MCF 10A (cell line): ENCODE measurements at regions of chr3 and their contacts with region 1.

Region 1: GRCh38 chr3:47824541-47825473 is 21.9 kb downstream of the DHX30 start:
- DNase-seq: peak; percentile 83
- H3K4me3 Mint-ChIP-seq: peak overlapping the region; percentile 85
- H3K27ac Mint-ChIP-seq: peak overlapping the region; percentile 92
- H3K4me1 Mint-ChIP-seq: peaks cover 12% of the 10 kb centered on the region
- H3K27me3 Mint-ChIP-seq: no peaks in the 10 kb centered on the region
- CTCF ChIP-seq: peak; percentile 72

Region 2: DNA sequence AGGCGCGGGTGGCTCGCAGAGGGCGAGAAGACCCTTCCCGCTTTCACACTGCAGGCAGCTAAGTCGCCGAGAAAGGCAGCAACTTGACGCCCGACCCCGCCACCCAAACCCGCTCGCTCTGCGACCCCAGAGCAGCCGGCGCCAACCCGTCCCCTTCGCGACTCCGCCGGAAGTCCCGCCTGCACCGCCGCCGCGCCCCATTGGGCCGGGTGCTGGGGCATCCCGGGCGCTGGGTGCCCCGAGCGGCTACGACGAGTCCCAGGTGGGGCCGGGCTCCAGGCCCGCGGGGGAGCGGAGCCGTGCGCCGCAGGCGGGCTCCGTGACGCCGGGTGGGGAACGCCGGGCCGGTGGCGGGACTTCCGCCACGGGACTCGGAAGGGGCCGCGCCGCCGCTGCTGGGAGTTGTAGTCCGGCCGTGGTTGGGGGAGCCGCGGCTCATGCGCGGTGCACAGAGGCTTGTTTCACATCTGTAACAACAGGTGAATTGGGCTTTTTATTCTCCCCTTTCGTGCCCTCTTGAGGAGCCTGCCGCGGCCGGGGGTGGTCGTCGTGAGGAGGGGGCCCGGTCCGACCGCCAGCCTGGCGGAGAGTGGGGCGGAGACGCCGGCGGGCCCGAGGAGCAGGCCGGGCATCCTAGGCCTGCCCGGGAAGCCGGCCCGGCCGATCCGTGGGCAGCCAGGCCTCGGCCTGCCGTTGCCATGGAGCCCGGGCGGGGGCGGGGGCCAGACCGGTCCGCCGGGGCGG is 21.9 kb before region 1 on chr3 and contains the start of gene DHX30:
- CTCF ChIA-PET with region 1: interaction called, 5 read pairs
- POLR2A ChIA-PET with region 1: interaction called, 28 read pairs
- intact Hi-C with region 1: no loop called
- DNase-seq: peak; percentile 80
- H3K4me3 Mint-ChIP-seq: peak within 1 kb of the TSS; percentile 94
- H3K27ac Mint-ChIP-seq: peak within 1 kb of the TSS; percentile 97
- H3K4me1 Mint-ChIP-seq: peaks cover 12% of the 10 kb centered on the region
- H3K27me3 Mint-ChIP-seq: no peaks in the 10 kb centered on the region
- CTCF ChIP-seq: no peak
- total RNA-seq, gene DHX30: 80.5 and 86.2 TPM in 2 replicates

Region 3: DNA sequence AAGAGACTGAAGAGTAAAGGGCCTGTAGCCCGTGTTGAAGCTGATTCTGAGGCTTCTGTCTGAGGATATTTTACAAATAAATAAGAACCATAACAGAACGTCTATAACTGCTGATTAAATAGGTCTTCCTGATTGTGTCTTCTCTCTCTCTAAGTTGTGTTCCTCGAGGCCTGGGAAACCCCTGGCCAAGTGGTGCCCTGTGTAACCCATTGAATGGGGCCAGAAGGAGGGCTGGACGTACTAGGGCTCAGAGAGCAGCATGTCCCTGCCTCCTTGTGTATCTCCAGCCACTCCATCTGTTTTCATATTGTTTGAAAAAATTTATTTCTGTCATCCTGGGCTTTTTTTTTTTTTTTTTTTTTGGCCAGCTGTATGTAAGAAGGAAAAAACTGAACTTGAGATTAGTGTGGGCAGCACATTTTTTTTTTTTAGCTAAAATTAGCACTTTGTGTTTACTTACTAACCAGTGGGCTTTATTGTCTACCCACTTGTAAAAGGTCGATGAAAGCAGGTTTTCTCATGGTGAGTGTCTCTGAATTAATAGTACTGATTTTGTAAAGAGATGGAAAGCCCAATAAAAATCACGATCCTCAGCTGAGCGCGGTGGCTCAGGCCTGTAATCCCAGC is 11.1 kb before region 1 on chr3:
- CTCF ChIA-PET with region 1: interaction called, 19 read pairs
- POLR2A ChIA-PET with region 1: interaction called, 13 read pairs
- intact Hi-C with region 1: no loop called
- DNase-seq: no peak
- H3K4me3 Mint-ChIP-seq: no peak overlapping the region
- H3K27ac Mint-ChIP-seq: no peak overlapping the region
- H3K4me1 Mint-ChIP-seq: no peaks in the 10 kb centered on the region
- H3K27me3 Mint-ChIP-seq: no peaks in the 10 kb centered on the region
- CTCF ChIP-seq: no peak

Region 4: DNA sequence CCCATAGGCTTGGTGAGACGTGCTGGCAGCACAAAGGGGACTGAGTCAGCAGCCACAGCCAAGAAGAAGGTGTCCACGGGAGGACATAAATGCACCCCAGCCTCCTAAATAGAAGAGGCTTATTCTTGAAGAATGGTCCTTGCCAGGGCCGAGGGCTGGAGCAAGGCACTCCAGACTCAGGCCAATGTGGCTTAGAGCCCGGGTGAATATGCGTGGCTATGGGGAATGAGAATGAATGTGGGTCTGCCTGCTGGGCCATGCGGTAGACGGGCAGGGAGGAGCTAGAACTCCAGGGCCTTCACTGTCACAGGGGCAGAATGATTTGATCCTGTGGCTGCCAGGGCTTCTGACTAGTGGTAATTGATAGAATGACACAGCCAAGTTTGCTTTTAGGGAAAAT is 12.2 kb after region 1 on chr3:
- CTCF ChIA-PET with region 1: interaction called, 37 read pairs
- POLR2A ChIA-PET with region 1: interaction called, 5 read pairs
- intact Hi-C with region 1: no loop called
- DNase-seq: no peak
- H3K4me3 Mint-ChIP-seq: no peak overlapping the region
- H3K27ac Mint-ChIP-seq: no peak overlapping the region
- H3K4me1 Mint-ChIP-seq: no peaks in the 10 kb centered on the region
- H3K27me3 Mint-ChIP-seq: no peaks in the 10 kb centered on the region
- CTCF ChIP-seq: no peak

Region 5: GRCh38 chr3:47989981-47990440 is 165.2 kb after region 1 on chr3:
- CTCF ChIA-PET with region 1: interaction called, 12 read pairs
- POLR2A ChIA-PET with region 1: interaction called, 8 read pairs
- intact Hi-C with region 1: loop called (anchors 1 kb)
- DNase-seq: peak; percentile 95
- H3K4me3 Mint-ChIP-seq: no peak overlapping the region
- H3K27ac Mint-ChIP-seq: peak overlapping the region; percentile 69
- H3K4me1 Mint-ChIP-seq: peaks cover 18% of the 10 kb centered on the region
- H3K27me3 Mint-ChIP-seq: no peaks in the 10 kb centered on the region
- CTCF ChIP-seq: peak; percentile 82

Region 6: DNA sequence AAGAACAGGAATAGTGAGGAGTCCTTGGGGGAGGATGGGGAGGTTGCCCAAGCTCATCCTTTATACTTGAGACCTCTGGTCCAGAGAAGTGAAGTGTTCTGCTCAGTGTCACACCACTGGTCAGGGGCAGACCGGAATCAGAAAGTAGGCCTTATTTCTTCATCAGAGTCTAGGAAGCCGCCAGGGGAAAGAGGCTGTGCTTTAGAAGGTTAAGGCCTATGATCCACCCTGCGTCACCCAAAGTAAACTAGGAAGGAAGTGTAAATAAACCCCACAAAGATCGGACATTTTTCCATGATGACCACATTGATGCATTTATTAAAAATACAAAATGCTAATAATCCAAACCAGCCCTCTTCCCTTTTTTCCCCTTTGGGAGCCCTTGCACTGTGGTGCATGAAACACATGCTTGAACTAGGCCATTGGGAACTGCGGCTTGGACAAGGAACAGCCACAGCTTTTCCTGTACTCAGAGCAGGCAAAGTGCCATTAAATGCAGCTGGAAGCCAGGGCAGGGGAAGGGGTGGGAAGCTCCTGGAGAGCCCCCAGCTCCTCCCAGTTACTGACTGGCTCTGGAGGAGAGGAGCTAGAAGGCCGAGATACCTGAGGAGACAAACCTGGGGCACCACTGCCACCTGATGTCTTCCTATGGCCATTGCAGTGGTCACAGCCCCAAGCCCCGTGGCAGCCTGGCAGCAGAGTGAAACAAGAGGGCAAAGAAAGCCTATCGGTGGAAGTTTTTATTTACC is 326.4 kb after region 1 on chr3:
- CTCF ChIA-PET with region 1: interaction called, 10 read pairs
- POLR2A ChIA-PET with region 1: no interaction called
- intact Hi-C with region 1: no loop called
- DNase-seq: peak; percentile 88
- H3K4me3 Mint-ChIP-seq: no peak overlapping the region
- H3K27ac Mint-ChIP-seq: no peak overlapping the region
- H3K4me1 Mint-ChIP-seq: peaks cover 23% of the 10 kb centered on the region
- H3K27me3 Mint-ChIP-seq: no peaks in the 10 kb centered on the region
- CTCF ChIP-seq: peak; percentile 92

Region 7: GRCh38 chr3:48285132-48285531 is 460.3 kb after region 1 on chr3:
- CTCF ChIA-PET with region 1: no interaction called
- POLR2A ChIA-PET with region 1: no interaction called
- intact Hi-C with region 1: no loop called
- DNase-seq: no peak
- H3K4me3 Mint-ChIP-seq: no peak overlapping the region
- H3K27ac Mint-ChIP-seq: no peak overlapping the region
- H3K4me1 Mint-ChIP-seq: no peaks in the 10 kb centered on the region
- H3K27me3 Mint-ChIP-seq: no peaks in the 10 kb centered on the region
- CTCF ChIP-seq: no peak